Left colon (tissue), 2 donors: ENCODE measurements at regions of chr11 and their contacts with region 1.

Region 1: DNA sequence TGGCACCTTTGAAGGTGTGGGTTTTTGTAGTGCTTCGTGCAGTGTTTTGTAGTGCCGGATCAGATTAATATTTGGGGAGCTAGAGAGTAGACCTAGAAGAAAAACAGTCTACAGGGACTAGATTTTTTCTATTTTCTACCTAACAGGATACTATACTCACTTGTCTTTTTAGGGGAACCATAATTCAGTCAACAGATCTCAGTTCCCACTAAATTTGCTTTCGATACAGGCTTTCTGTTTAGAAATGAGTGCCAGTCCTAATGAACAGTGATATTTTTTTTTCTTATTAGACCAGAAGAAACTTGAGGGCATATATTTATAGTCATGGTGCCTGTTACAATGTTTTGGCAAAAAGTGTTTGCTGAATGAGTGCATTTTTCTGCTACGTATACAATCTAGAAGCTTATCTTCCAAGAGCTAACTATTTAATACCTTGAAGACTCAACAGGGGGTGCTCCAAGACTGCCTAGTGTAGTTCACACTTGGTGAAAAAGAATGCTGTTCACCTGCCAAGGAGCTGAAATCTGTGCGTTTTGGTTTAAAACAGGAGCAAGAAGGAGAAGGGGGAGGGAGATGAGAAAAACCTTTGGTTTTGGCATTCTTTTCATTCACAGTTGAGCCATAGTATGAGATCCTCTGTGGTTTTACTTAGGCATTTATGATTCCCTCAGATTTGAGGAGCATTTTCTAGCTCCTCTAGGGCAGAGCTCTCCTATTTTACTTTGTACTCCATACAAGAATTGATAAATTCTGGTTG is 44.9 kb upstream of the VSTM5 start:
- DNase-seq: no peak
- ATAC-seq: peak; percentile 72

Region 2: GRCh38 chr11:94417386-94417987 is 522.2 kb after region 1 on chr11:
- intact Hi-C with region 1: loop called in 1 of 2 experiments (anchors 10 kb)
- DNase-seq: no peak
- ATAC-seq: peak; percentile 39

Region 3: GRCh38 chr11:94504689-94505293 is 609.5 kb after region 1 on chr11:
- intact Hi-C with region 1: loop called in 1 of 2 experiments (anchors 5 kb)
- DNase-seq: no peak
- ATAC-seq: peak; percentile 66